ENCODE measurements at regions of chr2 and their contacts with region 1.

Region 1: GRCh38 chr2:143311426-143311825 is 182.2 kb downstream of the ARHGAP15 start:
- DNase-seq: no peak
- ATAC-seq: no peak
- H3K4me3 ChIP-seq: no peak overlapping the region
- H3K4me3 Mint-ChIP-seq: no peak overlapping the region
- H3K27ac ChIP-seq: no peak overlapping the region
- H3K27ac Mint-ChIP-seq: no peak overlapping the region
- H3K4me1 ChIP-seq: no peaks in the 10 kb centered on the region
- H3K4me1 Mint-ChIP-seq: peaks cover 54% of the 10 kb centered on the region
- H3K27me3 ChIP-seq: no peaks in the 10 kb centered on the region
- H3K27me3 Mint-ChIP-seq: no peaks in the 10 kb centered on the region
- CTCF ChIP-seq: no peak

Region 2: GRCh38 chr2:142796161-142796560 is 515.3 kb before region 1 on chr2:
- CTCF ChIA-PET with region 1: no interaction called
- POLR2A ChIA-PET with region 1: no interaction called
- intact Hi-C with region 1: no loop called
- DNase-seq: no peak
- ATAC-seq: no peak
- H3K4me3 ChIP-seq: no peak overlapping the region
- H3K4me3 Mint-ChIP-seq: no peak overlapping the region
- H3K27ac ChIP-seq: no peak overlapping the region
- H3K27ac Mint-ChIP-seq: no peak overlapping the region
- H3K4me1 ChIP-seq: no peaks in the 10 kb centered on the region
- H3K4me1 Mint-ChIP-seq: no peaks in the 10 kb centered on the region
- H3K27me3 ChIP-seq: no peaks in the 10 kb centered on the region
- H3K27me3 Mint-ChIP-seq: no peaks in the 10 kb centered on the region
- CTCF ChIP-seq: no peak

Region 3: DNA sequence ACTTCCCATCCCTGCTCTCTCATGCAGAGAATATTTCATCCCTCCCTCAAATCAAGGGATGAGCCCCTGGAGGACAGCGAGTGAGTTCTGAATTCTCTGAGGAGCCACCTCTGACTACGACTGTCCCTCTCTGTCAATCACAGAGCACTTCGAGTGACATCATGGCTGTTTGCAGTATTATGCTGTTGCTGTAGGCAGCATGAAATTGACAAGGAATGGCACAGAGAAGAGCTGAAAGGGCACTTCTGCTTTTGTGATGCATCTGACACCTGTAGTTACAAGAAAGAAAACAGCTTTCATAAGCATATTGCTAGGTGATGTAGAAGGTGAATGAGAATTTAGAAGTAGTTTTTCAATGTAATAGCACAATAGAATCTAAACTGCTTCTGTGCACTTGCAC is 15.3 kb before region 1 on chr2:
- CTCF ChIA-PET with region 1: no interaction called
- POLR2A ChIA-PET with region 1: no interaction called
- intact Hi-C with region 1: loop called in 1 of 2 experiments (anchors 2 kb)
- DNase-seq: no peak
- ATAC-seq: no peak
- H3K4me3 ChIP-seq: no peak overlapping the region
- H3K4me3 Mint-ChIP-seq: no peak overlapping the region
- H3K27ac ChIP-seq: no peak overlapping the region
- H3K27ac Mint-ChIP-seq: no peak overlapping the region
- H3K4me1 ChIP-seq: no peaks in the 10 kb centered on the region
- H3K4me1 Mint-ChIP-seq: peaks cover 54% of the 10 kb centered on the region
- H3K27me3 ChIP-seq: no peaks in the 10 kb centered on the region
- H3K27me3 Mint-ChIP-seq: no peaks in the 10 kb centered on the region
- CTCF ChIP-seq: no peak

Region 4: GRCh38 chr2:143329288-143329687 is 17.9 kb after region 1 on chr2:
- CTCF ChIA-PET with region 1: interaction called, 3 read pairs
- POLR2A ChIA-PET with region 1: no interaction called
- intact Hi-C with region 1: loop called in 1 of 2 experiments (anchors 2 kb)
- DNase-seq: peak in 3 of 9 experiments; percentile 35 to 64 (median 49)
- ATAC-seq: peak; percentile 58
- H3K4me3 ChIP-seq: no peak overlapping the region
- H3K4me3 Mint-ChIP-seq: no peak overlapping the region
- H3K27ac ChIP-seq: peak overlapping the region in 1 of 2 experiments; percentile 47
- H3K27ac Mint-ChIP-seq: peak overlapping the region; percentile 71
- H3K4me1 ChIP-seq: peaks cover 44% of the 10 kb centered on the region
- H3K4me1 Mint-ChIP-seq: peaks cover 89% of the 10 kb centered on the region
- H3K27me3 ChIP-seq: no peaks in the 10 kb centered on the region
- H3K27me3 Mint-ChIP-seq: no peaks in the 10 kb centered on the region
- CTCF ChIP-seq: no peak

Measured in CD8-positive, alpha-beta T cell (primary cell).